ENCODE measurements at regions of chr1 and their contacts with region 1.

Region 1: GRCh38 chr1:22976461-22977243 is 4.0 kb upstream of the LACTBL1 start:
- DNase-seq: peak; percentile 54
- ATAC-seq: peak; percentile 89

Region 2: DNA sequence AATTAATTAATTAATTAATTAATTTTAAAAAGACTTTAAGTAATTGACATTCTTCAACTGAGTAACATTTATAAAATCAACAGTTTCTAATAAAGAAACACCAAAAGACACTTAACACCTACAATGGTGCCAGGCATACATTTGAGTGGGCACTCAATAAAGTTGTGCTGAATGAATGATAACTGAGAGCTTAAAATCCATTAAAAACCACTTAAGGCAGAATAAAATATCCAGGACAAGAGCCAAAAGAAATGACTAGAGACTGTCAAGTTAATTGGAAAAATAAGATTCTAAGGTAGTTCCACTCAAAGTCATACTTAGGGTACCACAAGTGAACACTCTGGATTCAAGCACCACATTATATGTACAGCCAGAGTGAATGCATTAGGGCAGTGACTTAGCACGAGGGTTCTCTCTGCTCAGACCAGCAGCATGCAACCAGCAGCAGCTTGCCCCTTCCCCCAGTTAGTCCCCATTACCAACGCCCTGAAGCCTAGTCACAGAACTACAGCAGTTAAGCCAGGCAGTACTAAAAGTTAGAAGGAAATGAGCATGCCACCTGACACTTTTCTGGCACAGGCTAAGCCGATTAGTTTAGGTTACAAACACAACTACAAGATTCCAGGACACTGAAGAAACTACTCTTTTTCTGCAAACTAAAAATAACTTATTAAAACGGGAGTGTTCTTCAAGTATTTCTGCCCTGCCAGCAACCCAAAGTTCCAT is 145.5 kb after region 1 on chr1:
- intact Hi-C with region 1: no loop called
- DNase-seq: no peak
- ATAC-seq: peak; percentile 54

Region 3: GRCh38 chr1:23184212-23184934 is 207.7 kb after region 1 on chr1:
- intact Hi-C with region 1: loop called (anchors 5 kb)
- DNase-seq: no peak
- ATAC-seq: peak; percentile 65

Region 4: DNA sequence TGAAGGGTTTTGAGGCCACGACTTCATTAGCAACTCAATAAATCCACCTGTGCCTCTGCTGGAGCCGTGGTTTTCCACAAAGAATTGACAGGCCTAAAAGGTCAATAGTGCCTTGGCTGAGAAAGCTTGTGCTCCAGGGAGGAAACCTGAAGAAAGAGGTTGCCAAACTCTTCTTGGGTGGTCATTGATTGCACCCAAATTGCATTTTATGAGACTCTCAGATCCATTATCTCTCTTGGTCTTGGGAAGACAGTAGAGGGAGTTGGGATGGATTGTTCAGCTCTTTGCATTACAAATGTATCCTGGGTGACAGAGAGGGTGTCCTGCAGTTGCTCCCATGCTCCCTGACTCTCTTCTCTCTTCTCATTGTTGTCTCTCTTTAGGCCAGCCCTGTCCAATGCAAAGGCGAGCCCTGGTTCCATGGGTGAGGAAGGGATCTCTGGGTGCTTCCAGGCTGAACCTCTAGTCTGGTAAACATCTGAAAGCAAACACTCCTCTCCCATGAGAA is 286.8 kb after region 1 on chr1:
- intact Hi-C with region 1: loop called (anchors 10 kb)
- DNase-seq: no peak
- ATAC-seq: no peak